Right ventricle myocardium inferior (tissue), 1 donor: ENCODE measurements at regions of chr4 and their contacts with region 1.

Region 1: GRCh38 chr4:23819041-23819511 is 70.8 kb downstream of the PPARGC1A start:
- DNase-seq: peak; percentile 63
- ATAC-seq: peak; percentile 90

Region 2: DNA sequence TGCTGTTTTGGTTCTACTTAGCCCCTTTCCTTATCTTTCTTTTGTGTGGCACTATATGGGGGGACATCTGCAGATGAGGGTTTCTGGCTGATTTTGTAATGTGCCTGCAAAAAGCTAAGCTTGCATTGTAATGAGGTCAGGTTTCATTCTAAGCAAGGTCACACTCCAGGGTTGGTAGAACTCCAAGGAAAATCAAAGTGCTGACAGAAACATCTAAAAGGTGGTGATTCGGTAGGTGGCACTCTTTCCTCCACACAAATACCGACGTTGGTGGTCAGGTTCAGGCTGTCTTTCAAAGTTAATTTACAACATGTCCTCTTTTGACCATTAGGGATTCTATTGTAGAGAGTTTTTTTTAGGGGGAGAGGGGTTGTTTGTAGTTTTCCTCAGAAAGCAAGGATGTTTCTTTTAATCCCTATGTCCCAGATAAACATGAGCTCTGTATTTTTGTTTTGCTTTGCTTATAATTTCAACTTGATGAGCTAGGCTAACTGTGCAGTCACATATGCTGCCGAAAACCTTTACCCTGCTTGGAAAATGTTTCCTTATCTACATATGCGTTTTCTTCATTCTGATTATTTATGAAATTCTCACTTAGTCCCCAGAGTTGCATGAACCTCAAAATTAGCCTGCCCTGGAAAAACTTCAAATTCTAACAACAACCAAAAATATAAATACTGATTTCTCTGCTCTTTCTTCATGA is 363.5 kb before region 1 on chr4:
- intact Hi-C with region 1: loop called (anchors 10 kb)
- DNase-seq: no peak
- ATAC-seq: peak; percentile 75

Region 3: DNA sequence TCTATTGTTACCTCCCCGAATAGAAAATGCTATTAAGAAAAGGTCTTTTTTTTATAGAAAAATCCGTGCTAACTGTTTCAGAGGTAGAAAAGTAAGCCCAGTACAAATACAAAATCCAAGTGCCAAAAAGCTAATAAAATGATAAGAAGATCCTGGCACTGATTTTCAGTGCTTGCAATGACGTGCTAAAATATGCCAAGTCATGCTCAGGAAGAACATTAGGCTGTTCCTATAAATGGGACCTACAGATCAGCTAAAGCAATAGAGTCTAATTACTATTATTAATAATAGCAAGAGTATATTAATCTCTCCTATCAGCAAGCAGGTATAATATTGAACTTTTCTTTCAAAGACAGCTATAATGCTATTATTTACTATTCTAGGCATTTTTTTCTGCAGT is 235.1 kb before region 1 on chr4:
- intact Hi-C with region 1: no loop called
- DNase-seq: no peak
- ATAC-seq: no peak

Region 4: GRCh38 chr4:23889814-23890341 is 70.8 kb after region 1 on chr4 and contains the start of gene PPARGC1A:
- intact Hi-C with region 1: loop called (anchors 5 kb)
- DNase-seq: peak; percentile 55
- ATAC-seq: peak; percentile 92
- total RNA-seq, gene PPARGC1A: 77.5 TPM